Posterior cingulate gyrus (tissue), 11 donors: ENCODE measurements at regions of chr10 and their contacts with region 1.

Region 1: GRCh38 chr10:63720072-63720537 is 198.9 kb downstream of the REEP3 start:
- DNase-seq: peak in 3 of 10 donors; percentile 22 to 47 (median 35)

Region 2: DNA sequence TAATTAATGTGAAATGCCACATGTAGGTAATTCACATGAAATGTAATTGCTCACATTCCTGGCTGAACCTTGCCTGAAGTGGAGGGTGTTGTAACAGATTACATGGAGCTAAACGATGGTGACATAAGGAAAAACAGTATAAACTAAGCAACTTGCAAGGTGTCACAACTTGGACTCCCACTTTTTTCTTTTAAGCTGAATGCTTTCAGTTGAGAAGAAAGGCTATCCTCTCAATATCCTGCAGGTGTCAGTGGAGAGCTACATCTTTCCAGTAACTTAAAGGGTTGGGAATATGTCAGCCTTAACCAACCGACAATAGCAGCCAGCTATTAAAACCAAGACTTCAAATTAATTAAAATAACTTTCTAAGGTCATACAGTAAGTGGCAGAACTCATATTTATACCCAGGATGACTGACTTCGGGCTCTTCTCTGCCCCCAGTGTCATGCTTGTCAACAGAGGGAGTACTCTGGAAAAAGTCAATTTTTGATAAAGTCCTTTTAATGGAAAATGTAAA is 553.3 kb before region 1 on chr10:
- intact Hi-C with region 1: loop called (anchors 2 kb)
- DNase-seq: peak in 1 of 10 donors; percentile 13

Region 3: DNA sequence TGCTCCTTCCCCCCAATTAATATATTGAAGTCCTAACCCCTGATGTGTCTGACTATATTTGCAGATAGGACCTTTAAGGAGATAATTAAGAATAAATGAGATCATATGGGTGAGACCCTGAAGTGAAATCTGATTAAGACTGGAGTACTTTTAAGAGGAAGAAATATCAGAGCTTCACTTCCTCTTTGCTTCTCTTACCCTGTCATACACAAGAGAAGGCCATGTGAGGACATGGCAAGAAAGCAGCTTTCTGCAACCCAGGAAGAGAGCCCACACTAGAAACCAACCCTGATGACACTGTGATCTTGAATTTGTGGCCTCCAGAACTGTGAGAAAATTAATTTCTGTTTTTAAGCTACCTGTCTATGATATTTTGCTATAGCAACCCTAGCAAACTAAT is 298.5 kb before region 1 on chr10:
- intact Hi-C with region 1: no loop called
- DNase-seq: no peak